ENCODE measurements at regions of chr17 and their contacts with region 1.

Region 1: GRCh38 chr17:4366327-4367063 is at the start of gene UBE2G1:
- DNase-seq: peak; percentile 99
- H3K4me3 Mint-ChIP-seq: peak within 1 kb of the TSS; percentile 77
- H3K27ac Mint-ChIP-seq: peak within 1 kb of the TSS; percentile 96
- H3K4me1 Mint-ChIP-seq: peaks cover 26% of the 10 kb centered on the region
- H3K27me3 Mint-ChIP-seq: no peaks in the 10 kb centered on the region
- total RNA-seq, gene UBE2G1: 74.8 and 77.3 TPM in 2 replicates

Region 2: GRCh38 chr17:4199818-4200402 is 166.6 kb before region 1 on chr17:
- intact Hi-C with region 1: no loop called
- DNase-seq: peak; percentile 81
- H3K4me3 Mint-ChIP-seq: no peak overlapping the region
- H3K27ac Mint-ChIP-seq: no peak overlapping the region
- H3K4me1 Mint-ChIP-seq: peaks cover 9% of the 10 kb centered on the region
- H3K27me3 Mint-ChIP-seq: no peaks in the 10 kb centered on the region

Region 3: GRCh38 chr17:4249452-4250029 is 117.0 kb before region 1 on chr17:
- intact Hi-C with region 1: no loop called
- DNase-seq: no peak
- H3K4me3 Mint-ChIP-seq: no peak overlapping the region
- H3K27ac Mint-ChIP-seq: peak overlapping the region; percentile 30
- H3K4me1 Mint-ChIP-seq: peaks cover 34% of the 10 kb centered on the region
- H3K27me3 Mint-ChIP-seq: no peaks in the 10 kb centered on the region

Region 4: GRCh38 chr17:4263282-4264215 is 102.9 kb before region 1 on chr17 and contains the start of gene ANKFY1:
- intact Hi-C with region 1: loop called (anchors 1 kb)
- DNase-seq: peak; percentile 100
- H3K4me3 Mint-ChIP-seq: peak within 1 kb of the TSS; percentile 95
- H3K27ac Mint-ChIP-seq: peak within 1 kb of the TSS; percentile 95
- H3K4me1 Mint-ChIP-seq: peaks cover 31% of the 10 kb centered on the region
- H3K27me3 Mint-ChIP-seq: no peaks in the 10 kb centered on the region
- total RNA-seq, gene ANKFY1: 53.1 and 53.6 TPM in 2 replicates

Region 5: GRCh38 chr17:4520894-4521600 is 154.6 kb after region 1 on chr17:
- intact Hi-C with region 1: no loop called
- DNase-seq: no peak
- H3K4me3 Mint-ChIP-seq: no peak overlapping the region
- H3K27ac Mint-ChIP-seq: no peak overlapping the region
- H3K4me1 Mint-ChIP-seq: no peaks in the 10 kb centered on the region
- H3K27me3 Mint-ChIP-seq: peaks cover 3% of the 10 kb centered on the region

Measured in activated CD4-positive, alpha-beta T cell treated with anti-CD3 and anti-CD28 coated beads, Interleukin-2, amount 10 ng/mL, durations not matched to agents 24 days and 14 days (primary cell).